ENCODE measurements at regions of chr6 and their contacts with region 1.

Region 1: DNA sequence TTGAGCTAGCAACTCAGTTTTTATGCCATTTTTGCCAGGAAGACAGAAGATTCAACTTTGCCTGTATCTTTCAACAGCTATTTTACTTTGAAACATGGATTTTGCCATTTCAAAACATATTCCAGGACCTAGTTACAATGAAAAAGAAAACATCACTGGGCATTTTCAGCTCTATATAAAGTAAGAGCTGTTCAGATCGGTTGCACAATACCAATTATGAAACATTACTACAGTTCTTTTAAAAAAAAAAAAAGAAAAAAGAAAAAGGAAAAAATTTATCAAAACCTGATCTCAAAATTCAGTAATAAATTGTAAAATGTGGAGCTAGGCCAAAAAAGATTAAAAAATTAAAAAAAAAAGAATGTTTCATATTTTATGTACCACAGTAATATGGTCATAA is 15.6 kb downstream of the BCLAF1 start:
- DNase-seq: no peak
- H3K4me3 Mint-ChIP-seq: no peak overlapping the region
- H3K27ac Mint-ChIP-seq: no peak overlapping the region
- H3K4me1 Mint-ChIP-seq: peaks cover 21% of the 10 kb centered on the region
- H3K27me3 Mint-ChIP-seq: no peaks in the 10 kb centered on the region

Region 2: DNA sequence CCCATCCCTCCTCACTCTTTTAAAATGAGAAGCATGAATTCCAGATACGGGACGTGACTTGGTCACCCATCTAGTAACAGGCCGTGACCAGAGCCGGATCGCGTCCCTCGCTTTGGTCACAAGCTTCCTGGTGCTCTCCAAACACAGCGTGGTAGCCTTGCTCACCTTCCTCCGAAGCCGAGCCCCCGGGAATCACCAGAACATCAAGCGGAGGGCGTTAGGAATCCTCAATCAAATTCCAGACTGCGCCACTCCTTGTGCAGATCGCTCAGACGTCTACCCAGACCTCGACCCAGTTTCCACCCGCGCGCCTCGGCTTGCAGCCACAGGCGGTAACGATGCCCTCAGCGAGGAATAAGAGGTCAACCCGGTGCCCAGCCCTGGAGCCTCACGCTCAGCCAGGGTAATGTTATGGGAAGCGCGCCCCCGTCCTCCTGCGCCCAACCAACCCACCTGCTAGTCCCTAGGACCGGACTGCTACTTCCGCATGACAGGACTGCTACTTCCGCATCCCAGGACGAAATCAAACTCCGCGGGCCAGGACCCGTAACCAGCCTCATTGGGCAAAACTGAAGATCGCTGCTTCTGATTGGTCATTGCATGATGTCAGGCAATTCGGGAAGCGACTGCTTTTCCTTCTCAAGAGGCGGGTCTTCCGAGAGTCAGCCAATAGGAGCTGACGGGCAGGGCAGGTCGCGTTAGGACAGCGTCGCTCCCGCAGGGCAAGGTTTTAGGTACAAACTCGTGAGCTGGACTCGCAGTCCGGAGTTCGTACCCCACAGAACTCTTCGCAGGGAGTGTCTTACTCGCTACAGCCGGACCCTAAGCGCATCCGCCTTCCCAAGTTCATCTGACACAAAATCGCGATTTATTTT is 24.0 kb before region 1 on chr6 and contains the start of gene MTFR2:
- intact Hi-C with region 1: loop called (anchors 2 kb)
- DNase-seq: peak; percentile 98
- H3K4me3 Mint-ChIP-seq: peak within 1 kb of the TSS; percentile 97
- H3K27ac Mint-ChIP-seq: peak within 1 kb of the TSS; percentile 91
- H3K4me1 Mint-ChIP-seq: peaks cover 52% of the 10 kb centered on the region
- H3K27me3 Mint-ChIP-seq: no peaks in the 10 kb centered on the region
- total RNA-seq, gene MTFR2: 24.4 and 24.6 TPM in 2 replicates

Region 3: GRCh38 chr6:136262940-136263339 is 11.1 kb before region 1 on chr6:
- intact Hi-C with region 1: loop called (anchors 1 kb)
- DNase-seq: no peak
- H3K4me3 Mint-ChIP-seq: no peak overlapping the region
- H3K27ac Mint-ChIP-seq: no peak overlapping the region
- H3K4me1 Mint-ChIP-seq: peaks cover 21% of the 10 kb centered on the region
- H3K27me3 Mint-ChIP-seq: no peaks in the 10 kb centered on the region

Region 4: GRCh38 chr6:136628996-136629395 is 354.9 kb after region 1 on chr6:
- intact Hi-C with region 1: no loop called
- DNase-seq: no peak
- H3K4me3 Mint-ChIP-seq: no peak overlapping the region
- H3K27ac Mint-ChIP-seq: no peak overlapping the region
- H3K4me1 Mint-ChIP-seq: peaks cover 10% of the 10 kb centered on the region
- H3K27me3 Mint-ChIP-seq: no peaks in the 10 kb centered on the region

Measured in activated CD4-positive, alpha-beta T cell treated with anti-CD3 and anti-CD28 coated beads, Interleukin-2, amount 10 ng/mL, durations not matched to agents 24 days and 14 days (primary cell).